Heart right ventricle (tissue), 16 donors: ENCODE measurements at regions of chr19 and their contacts with region 1.

Region 1: DNA sequence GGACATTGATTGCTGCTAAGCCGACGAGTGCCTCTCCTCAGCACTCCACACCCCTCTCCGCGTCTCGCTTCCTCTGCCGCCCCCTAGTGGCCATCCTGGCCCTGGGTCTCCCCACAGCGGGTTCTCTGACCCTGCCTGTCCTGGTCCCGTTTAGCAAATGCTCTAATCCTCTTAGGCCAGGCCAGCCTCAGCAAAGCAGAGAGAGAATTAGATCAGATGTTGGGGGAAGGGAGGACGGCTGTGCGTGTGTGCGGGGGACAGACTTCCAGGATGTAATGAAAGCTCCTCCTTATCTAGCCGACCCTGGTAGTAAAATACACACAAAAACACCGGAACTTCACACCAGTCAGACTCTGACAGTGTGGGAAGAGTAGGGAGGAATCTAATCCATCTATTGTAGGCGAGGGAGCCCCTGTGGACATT is 4.5 kb downstream of the TPRX2 start:
- DNase-seq: peak; percentile 84 to 89
- ATAC-seq: peak; percentile 87 to 95 (median 92)
- H3K4me3 ChIP-seq: no peak overlapping the region
- H3K27ac ChIP-seq: no peak overlapping the region
- H3K4me1 ChIP-seq: no peaks in the 10 kb centered on the region
- H3K27me3 ChIP-seq: peaks cover 0 to 25% (median 4%) of the 10 kb centered on the region in 7 donors
- CTCF ChIP-seq: peak; percentile 80 to 98 (median 95)

Region 2: DNA sequence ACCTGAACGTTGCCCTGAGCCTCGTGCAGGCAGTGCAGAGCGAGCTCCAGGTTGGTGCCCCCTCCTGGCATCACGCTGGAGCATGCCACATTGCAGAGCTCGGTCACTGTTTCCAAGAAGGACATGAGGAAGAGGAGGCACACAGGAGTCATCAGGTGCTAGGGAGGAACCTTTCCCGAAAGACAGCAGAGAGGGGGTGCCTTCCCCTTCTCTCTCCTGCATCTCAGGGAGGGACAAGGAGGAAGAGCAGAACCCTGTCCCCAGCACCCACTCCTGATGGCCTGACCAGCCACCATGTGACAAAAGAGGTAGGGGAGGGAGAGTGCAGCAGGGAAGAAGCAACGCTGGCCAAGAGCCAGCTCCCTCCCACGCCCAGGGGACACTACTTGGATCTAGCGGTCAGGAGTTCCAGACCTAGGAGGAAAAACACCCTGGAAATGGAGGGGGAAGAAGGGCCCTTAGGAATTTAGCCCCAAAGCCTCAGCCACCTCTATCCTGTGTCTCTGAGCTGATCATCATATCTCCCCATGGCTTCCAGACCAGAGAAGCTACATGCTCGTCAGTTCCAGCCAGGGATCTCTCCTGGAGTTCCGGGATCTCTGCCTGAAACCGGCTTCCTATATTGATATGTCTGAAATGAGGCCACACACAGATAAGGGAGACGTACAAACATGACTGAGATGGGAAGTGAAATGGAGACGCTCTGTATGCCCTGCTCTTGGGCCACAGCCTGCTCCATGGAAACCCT is 331.7 kb before region 1 on chr19:
- intact Hi-C with region 1: no loop called
- DNase-seq: no peak
- ATAC-seq: peak in 3 of 8 donors; percentile 14 to 50 (median 25)
- H3K4me3 ChIP-seq: no peak overlapping the region
- H3K27ac ChIP-seq: no peak overlapping the region
- H3K4me1 ChIP-seq: peaks cover 0 to 6% (median 0%) of the 10 kb centered on the region in 9 donors
- H3K27me3 ChIP-seq: no peaks in the 10 kb centered on the region
- CTCF ChIP-seq: no peak

Region 3: DNA sequence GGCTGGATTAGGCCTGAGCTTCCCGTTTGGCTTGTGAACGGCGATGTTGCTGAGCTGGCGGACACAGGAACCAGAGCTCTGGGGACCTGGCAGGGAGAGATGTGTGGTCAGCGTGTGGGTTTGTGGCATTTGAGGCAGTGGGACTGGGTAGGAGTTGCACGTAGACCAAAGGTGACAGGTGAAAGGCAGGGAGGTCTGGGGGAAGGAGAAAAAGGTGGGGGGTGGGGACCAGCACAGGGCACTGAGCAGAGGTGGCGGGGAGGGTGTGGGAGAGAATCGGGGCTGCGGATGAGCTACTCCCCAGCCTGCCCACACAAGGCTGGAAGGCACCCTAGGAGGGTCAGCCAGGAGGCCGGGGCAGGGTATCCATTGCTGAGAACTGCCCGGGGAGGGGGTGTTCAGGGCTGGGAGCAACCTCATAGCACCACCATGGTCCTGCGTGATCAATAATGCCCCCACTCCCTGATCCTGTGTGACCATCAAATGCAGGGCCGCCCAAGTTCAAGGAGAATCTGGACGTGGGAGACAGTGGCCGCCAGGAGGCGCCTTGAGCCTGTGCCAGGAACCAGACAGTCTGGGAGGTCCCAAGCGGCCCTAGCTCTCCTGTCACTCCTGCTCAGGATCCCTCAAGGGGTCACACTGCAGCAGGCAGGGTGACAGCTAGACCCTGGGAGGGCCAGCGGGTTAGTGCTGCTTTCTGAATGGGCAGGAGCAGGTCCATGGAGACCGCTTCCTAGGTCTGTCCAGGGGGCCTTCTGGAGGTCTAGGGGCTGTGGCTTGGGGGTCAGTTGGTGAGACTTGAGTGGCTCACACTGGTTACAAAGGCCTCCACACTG is 97.8 kb before region 1 on chr19:
- intact Hi-C with region 1: loop called in 4 of 10 experiments (anchors 2 to 10 kb)
- DNase-seq: peak; percentile 57 to 80
- ATAC-seq: peak; percentile 76 to 84 (median 79)
- H3K4me3 ChIP-seq: no peak overlapping the region
- H3K27ac ChIP-seq: no peak overlapping the region
- H3K4me1 ChIP-seq: peaks cover 0 to 24% (median 4%) of the 10 kb centered on the region in 9 donors
- H3K27me3 ChIP-seq: no peaks in the 10 kb centered on the region
- CTCF ChIP-seq: peak; percentile 67 to 91 (median 84)

Region 4: GRCh38 chr19:47813304-47814004 is 50.1 kb before region 1 on chr19:
- intact Hi-C with region 1: loop called in 3 of 10 experiments (anchors 5 to 10 kb)
- DNase-seq: peak; percentile 65 to 77
- ATAC-seq: peak; percentile 51 to 86 (median 74)
- H3K4me3 ChIP-seq: no peak overlapping the region
- H3K27ac ChIP-seq: no peak overlapping the region
- H3K4me1 ChIP-seq: no peaks in the 10 kb centered on the region
- H3K27me3 ChIP-seq: peaks cover 0 to 15% (median 4%) of the 10 kb centered on the region in 7 donors
- CTCF ChIP-seq: peak; percentile 31 to 61 (median 56)